Aorta (tissue), 5 donors: ENCODE measurements at regions of chr19 and their contacts with region 1.

Region 1: DNA sequence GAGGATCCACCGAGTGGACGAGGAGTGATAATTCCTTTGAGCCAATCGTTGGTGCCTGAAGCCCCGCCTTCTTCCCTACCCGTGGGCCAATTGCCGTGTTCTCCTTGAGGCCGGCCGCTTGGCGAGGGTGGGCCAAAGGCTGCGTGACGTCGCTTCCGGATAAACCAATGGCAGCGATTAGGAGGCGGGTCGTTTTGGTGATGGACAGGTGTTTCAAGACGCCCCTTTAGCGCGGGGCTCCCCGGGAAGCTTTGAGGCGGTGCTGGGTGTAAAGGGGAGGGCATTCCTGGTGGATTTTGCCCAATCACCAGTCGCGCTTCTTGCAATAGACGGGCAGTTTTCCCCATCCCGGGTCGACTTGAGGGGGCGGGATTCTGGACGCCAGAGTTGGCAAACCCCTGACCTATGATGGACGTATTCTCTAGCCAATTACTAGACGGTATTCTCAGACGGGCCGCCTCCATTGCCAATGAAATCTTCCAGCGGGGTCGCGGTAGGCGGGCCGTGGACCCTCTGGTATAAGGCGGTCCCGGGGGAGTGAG is 310 bp upstream of the PRMT1 start:
- DNase-seq: peak; percentile 99 to 100
- ATAC-seq: peak; percentile 93
- H3K4me3 ChIP-seq: peak overlapping the region; percentile 48 to 69
- H3K27ac ChIP-seq: peak overlapping the region in 1 of 2 donors; percentile 60
- H3K4me1 ChIP-seq: no peaks in the 10 kb centered on the region
- H3K27me3 ChIP-seq: no peaks in the 10 kb centered on the region

Region 2: DNA sequence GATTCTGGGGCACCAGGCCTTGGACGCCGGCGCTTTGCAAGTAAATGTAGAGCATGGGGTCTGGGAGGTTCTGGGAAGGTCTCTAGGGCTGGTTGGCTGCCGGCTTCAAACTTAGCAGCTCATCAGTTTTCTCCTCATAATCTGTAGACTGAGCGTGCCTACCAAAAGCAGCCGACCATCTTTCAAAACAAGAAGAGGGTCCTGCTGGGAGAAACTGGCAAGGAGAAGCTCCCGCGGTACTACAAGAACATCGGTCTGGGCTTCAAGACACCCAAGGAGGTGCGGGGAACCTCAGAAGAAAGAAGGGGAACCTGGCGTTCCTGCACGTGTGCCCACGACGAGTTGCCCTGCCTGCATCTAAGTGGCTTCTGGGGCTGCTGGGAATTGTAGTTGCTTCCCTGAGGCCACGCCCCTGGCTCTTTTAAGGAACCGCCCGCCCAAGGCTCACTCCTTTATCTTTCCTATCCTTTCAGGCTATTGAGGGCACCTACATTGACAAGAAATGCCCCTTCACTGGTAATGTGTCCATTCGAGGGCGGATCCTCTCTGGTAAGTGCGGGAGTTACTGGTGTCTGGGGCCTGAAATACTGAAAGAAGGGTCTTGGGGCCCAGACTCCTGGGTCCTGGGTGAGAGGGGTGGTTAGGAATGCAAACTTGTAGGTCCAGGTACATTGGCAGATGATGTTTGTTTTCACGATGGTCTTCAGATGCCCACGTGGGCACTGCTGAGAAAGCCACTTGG is 179.5 kb before region 1 on chr19:
- intact Hi-C with region 1: loop called in 1 of 2 experiments (anchors 10 kb)
- DNase-seq: peak in 1 of 2 donors; percentile 86
- ATAC-seq: no peak
- H3K4me3 ChIP-seq: peak overlapping the region; percentile 77 to 93
- H3K27ac ChIP-seq: peak overlapping the region in 1 of 2 donors; percentile 52
- H3K4me1 ChIP-seq: no peaks in the 10 kb centered on the region
- H3K27me3 ChIP-seq: no peaks in the 10 kb centered on the region

Region 3: GRCh38 chr19:49637821-49638738 is 38.7 kb before region 1 on chr19:
- intact Hi-C with region 1: no loop called
- DNase-seq: peak; percentile 93 to 96
- ATAC-seq: peak; percentile 4
- H3K4me3 ChIP-seq: peak overlapping the region; percentile 37 to 71
- H3K27ac ChIP-seq: peak overlapping the region; percentile 22 to 59
- H3K4me1 ChIP-seq: no peaks in the 10 kb centered on the region
- H3K27me3 ChIP-seq: no peaks in the 10 kb centered on the region

Region 4: GRCh38 chr19:49727217-49728030 is 50.7 kb after region 1 on chr19:
- intact Hi-C with region 1: no loop called
- DNase-seq: peak; percentile 72 to 84
- ATAC-seq: peak; percentile 78
- H3K4me3 ChIP-seq: no peak overlapping the region
- H3K27ac ChIP-seq: no peak overlapping the region
- H3K4me1 ChIP-seq: no peaks in the 10 kb centered on the region
- H3K27me3 ChIP-seq: no peaks in the 10 kb centered on the region

Region 5: GRCh38 chr19:49758292-49758691 is 81.5 kb after region 1 on chr19:
- intact Hi-C with region 1: loop called in 1 of 2 experiments (anchors 10 kb)
- DNase-seq: no peak
- ATAC-seq: no peak
- H3K4me3 ChIP-seq: no peak overlapping the region
- H3K27ac ChIP-seq: no peak overlapping the region
- H3K4me1 ChIP-seq: no peaks in the 10 kb centered on the region
- H3K27me3 ChIP-seq: no peaks in the 10 kb centered on the region